ENCODE measurements at regions of chr19 and their contacts with region 1.

Region 1: DNA sequence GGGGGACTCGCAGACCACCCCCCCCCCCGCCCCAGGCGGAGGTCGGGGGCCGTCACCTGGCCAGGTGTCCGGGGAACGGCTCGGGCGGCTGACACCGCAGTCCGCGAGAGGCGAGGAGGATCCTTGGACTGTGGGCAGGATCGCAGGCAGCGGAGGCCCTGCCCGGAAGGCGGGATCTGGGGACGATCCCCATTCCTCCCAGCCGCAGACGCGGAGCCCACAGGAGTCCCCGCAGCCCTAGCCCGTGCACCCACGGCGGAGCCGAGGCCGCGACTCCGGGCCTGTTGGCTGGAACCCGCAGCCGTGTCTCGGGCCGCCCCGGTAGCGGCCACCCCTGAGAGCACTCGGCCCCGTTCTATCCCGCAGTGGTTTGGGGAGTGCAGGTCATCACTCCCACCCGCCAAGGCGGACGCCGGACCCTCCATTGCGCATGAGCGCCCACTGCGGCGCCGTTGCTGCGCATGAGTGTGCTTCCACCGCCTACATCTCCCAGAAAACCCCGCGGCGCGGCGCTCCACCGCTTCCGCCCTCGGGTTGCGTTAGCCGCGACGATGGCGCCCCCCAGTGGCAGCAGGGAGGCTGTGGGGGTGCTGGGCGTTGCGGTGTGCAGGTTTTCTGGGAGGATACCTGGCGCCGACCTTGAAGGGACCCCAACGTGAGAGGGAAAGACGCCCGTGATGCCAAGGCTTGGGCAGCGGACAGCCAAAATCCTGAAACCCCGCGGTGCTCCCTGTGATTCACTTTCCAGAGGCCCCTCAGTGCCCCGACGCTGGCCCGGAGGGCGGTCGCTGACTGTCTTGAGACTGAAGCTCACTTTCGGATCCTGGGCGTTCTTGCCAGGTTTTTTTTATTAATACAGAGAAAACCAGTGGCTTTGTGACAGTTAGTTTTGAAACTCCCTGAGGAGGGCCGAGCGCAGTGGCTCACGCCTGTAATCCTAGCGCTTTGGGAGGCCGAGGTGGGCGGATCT is 4.4 kb upstream of the ZNF329 start:
- DNase-seq: peak; percentile 79 to 99 (median 96)

Region 2: DNA sequence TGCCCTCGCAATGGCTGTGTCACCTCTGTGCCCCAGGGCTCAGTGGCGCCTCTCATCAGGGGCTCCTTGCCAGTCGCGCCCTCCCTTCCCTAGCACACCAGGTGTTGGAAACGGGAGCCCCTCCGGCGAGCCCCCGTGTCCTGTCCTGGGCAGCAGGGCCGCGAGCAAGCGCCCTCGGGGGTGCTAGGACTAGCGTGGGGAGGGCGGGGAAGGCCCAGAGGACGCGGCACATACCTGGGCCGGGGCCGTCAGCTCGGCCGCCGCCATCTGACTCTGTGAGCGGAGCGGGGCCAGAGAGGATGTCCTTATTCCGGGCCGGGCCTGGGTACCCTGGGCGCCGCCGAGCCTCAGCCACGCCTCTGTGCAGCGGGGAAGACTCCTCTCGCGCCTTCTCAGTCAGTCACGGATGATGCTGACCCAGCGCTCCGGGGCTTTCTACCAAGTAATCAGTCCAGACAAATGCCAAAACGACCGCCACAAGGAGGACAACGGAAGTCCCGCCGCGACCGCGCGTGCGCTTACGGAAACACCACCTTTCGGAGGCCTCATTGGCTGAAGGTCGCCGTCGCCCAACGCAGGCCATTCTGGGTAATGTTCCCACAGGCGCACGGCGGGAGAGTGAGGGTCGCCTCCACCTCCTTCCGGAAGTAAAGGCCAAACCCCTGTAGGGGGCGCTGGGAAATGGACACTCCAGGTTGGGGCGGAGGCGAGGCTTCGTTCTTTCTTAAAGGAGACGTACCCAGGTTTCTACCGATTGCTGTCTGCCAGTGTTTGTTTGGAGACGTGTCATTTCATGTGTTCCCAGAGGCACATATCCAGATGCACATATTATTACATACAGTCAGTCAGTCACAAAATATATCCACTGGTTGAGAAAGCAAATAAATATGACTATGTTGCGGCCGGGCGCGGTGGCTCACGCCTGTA is 207.5 kb before region 1 on chr19 and contains the start of gene ZNF256:
- intact Hi-C with region 1: loop called (anchors 10 kb)
- DNase-seq: peak; percentile 91 to 99 (median 96)

Region 3: DNA sequence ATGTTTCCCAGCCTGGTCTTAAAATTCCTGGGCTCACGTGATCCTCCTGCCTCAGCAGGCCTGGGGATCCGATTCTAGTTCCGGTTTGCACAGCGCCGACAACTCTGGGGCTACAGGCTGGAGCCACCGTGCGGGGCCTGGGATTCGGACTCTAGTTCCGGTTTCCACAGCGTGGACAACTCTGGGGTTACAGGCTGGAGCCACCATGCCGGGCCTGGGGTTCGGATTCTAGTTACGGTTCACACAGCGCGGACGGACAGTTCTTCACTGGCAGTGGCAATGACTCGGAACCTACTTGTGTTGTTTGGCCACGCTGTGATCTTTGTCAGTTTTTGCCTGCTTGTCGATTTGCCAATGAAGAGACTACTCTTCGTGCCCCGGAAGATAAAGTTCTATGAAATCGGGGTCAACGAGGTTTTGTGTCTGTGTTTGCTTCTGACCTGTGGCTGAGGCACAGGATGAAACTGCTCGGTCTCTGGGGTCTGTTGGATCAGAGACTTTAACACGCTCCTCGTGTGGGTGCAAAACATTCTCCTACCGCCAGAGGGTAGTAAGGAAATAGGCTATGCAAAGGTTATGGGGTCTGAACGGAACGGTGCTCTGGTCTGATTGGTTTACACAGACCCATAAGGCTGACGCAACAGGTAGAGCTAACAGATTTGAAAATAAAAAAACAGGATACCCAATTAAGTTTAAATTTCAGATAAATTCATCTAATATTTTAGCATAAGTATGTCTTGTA is 133.3 kb before region 1 on chr19:
- intact Hi-C with region 1: loop called (anchors 2 kb)
- DNase-seq: peak in 40 of 42 donors; percentile 1 to 92 (median 74)

Region 4: GRCh38 chr19:58097781-58098681 is 56.9 kb before region 1 on chr19 and contains the start of gene ZSCAN18:
- intact Hi-C with region 1: loop called (anchors 10 kb)
- DNase-seq: peak; percentile 97 to 100 (median 99)

Region 5: DNA sequence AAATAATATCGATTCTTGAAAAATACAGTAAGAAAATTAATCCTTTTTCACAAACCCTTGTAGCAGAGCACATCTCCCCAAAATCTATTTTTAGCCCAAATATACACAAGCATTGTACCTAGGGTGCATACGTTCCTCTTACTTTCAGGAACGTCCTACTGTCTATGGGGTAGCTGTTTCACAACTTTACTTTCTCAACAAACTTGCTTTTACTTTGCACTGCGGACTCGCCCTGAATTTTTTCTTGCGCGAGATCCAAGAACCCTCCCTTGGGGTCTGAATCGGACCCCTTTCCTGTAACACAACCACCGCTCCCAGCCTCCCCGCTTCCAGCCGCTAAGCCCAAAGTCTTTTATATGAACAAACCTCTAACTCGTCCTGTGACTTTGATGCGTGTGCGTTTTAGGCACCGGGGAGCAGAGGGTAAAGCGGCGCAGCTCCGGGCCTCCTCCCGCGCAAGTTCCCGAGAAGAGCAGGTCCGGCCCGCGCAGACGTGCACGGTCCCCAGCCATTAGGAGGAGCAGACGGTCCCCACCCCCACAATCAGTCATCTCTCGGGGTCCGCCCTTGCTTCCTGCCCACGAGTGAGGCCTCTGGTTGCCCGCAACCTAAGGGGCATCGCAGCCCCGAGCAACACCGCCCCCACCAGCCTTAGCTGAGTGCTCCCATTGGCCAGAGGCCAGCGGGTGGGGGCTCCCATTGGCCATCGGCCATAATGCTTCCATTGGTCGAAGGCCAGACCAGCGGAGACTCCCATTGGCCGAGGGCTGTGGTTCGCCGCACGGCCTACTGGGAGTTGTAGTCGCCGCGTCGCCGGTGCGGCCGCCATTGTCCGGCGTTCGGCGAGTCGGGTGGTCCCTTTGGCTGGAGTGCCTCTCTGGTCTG is 123.4 kb after region 1 on chr19 and contains the start of gene ZNF8:
- intact Hi-C with region 1: no loop called
- DNase-seq: peak; percentile 95 to 99 (median 97)